Endothelial cell of umbilical vein (primary cell): ENCODE measurements at regions of chr3 and their contacts with region 1.

Region 1: GRCh38 chr3:56988458-56989168 is 71.9 kb upstream of the SPATA12 start:
- DNase-seq: peak; percentile 87
- H3K4me3 ChIP-seq: no peak overlapping the region
- H3K27ac ChIP-seq: no peak overlapping the region
- H3K4me1 ChIP-seq: no peaks in the 10 kb centered on the region
- H3K27me3 ChIP-seq: peaks cover 0 to 2% of the 10 kb centered on the region in 2 experiments
- CTCF ChIP-seq: peak; percentile 61 to 62
- POLR2A ChIP-seq: no peak

Region 2: GRCh38 chr3:56682462-56683121 is 306.0 kb before region 1 on chr3:
- CTCF ChIA-PET with region 1: interaction called, 12 read pairs
- POLR2A ChIA-PET with region 1: no interaction called
- dilution Hi-C with region 1: no loop called
- intact Hi-C with region 1: no loop called
- DNase-seq: peak; percentile 76
- H3K4me3 ChIP-seq: peak overlapping the region; percentile 40 to 85 (median 76)
- H3K27ac ChIP-seq: peak overlapping the region; percentile 82
- H3K4me1 ChIP-seq: peaks cover 14% of the 10 kb centered on the region
- H3K27me3 ChIP-seq: no peaks in the 10 kb centered on the region
- CTCF ChIP-seq: peak in 1 of 2 donors; percentile 9
- POLR2A ChIP-seq: peak; percentile 86

Region 3: DNA sequence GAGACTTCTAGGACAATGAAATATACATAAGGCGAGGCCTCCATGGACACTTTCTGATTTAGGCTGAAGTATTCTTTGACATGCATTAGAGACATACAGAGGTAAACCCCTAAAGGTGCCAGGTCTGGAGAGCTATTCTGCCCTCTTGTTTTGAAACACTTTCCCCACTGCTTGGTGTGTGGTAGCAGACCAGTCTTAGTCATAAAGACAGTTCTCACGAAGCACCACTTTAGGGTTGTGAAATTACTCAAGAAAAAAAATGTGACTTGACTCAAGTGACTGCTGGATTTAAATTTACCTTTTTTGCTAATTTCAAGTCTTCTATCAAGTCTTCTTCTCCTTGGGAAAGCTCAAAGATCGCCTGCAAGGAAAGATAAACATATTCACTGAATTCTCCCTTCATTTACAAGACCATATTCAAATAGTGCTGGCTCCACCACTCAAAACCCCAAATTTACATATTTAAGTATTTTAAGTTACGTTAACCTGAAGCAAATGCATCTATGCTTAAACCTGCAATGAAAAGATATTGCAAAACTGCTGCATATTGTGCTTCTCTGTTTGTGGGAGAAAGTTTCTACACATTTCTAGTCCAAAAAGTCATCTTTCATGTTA is 235.3 kb before region 1 on chr3:
- CTCF ChIA-PET with region 1: interaction called, 16 read pairs
- POLR2A ChIA-PET with region 1: no interaction called
- dilution Hi-C with region 1: no loop called
- intact Hi-C with region 1: loop called (anchors 5 kb)
- DNase-seq: no peak
- H3K4me3 ChIP-seq: no peak overlapping the region
- H3K27ac ChIP-seq: no peak overlapping the region
- H3K4me1 ChIP-seq: peaks cover 23% of the 10 kb centered on the region
- H3K27me3 ChIP-seq: no peaks in the 10 kb centered on the region
- CTCF ChIP-seq: no peak
- POLR2A ChIP-seq: no peak

Region 4: DNA sequence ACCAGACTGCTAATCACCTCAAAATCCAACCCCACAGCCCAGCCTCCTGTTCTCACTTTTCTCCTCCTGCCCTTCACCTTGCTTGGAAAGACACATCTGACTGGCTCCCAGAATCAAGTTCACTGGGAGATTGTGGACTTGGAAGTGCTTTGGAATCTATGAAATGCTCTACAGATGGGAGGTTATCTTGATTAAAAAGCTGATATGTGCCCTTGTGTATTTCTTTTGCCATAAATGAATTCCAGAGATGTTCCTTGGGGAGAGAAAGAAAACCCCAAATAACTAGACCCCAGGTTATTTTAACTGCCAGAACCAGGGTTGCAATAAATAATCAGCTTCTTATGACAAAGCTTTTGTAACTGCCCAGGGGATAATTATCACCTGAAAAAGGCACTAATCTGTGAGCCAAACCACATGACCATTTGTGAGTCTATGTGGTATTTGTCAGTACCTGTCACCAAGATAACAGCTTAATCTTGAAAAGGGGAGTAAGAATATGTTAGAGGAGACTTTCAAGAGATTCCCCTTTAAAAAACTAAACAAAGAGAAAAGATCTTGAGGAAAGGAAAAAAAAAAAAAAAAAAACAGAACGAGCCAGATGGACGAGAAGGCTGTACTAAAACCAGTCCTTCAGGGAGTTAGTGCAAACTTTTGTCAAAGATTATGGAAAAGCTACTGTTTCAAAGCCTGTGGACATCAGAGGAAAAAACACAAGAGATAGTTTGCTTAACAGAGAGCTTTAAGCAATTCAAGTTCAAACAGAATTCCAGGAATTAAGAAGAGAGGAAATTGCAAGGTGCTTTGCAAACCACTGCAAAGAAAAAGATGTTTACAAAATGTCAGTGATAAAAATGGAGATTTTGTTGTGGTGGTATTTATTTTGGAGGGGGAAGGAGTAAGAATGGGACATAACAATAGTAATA is 164.9 kb before region 1 on chr3:
- CTCF ChIA-PET with region 1: interaction called, 24 read pairs
- POLR2A ChIA-PET with region 1: no interaction called
- dilution Hi-C with region 1: no loop called
- intact Hi-C with region 1: no loop called
- DNase-seq: no peak
- H3K4me3 ChIP-seq: no peak overlapping the region
- H3K27ac ChIP-seq: no peak overlapping the region
- H3K4me1 ChIP-seq: no peaks in the 10 kb centered on the region
- H3K27me3 ChIP-seq: peaks cover 0 to 4% of the 10 kb centered on the region in 2 experiments
- CTCF ChIP-seq: no peak
- POLR2A ChIP-seq: no peak

Region 5: DNA sequence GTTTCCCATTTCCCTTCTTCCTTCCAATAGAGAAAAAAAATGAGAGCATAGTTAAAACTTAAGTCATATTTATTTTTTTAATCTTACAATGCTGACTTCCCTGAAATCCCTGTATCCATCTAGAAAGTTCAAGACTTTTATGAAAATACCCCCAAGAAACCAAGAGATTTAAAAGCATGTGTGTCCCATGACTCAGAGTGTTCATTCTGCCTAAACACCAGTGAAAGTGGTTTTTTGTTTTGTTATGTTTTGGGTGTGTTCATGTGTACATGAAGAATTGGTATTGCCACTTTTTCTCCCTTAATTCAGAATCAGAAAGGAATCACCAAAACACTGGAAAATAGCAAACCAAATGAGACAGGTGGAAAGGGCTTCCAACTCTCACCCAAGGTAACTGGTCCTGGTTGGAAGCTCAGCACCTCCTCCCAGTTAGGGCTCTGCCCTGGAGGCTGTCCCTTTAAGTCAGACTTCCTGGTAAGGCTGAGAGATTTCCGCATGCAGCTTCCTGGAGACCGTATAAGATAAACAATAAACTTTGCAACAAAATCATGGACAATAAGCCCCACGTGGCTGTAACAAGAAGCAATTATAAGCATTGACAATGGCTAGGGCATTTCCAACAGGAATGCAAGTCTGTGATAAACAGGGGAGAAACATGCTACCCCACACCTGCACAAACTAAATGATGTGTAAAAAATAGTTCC is 64.9 kb before region 1 on chr3:
- CTCF ChIA-PET with region 1: interaction called, 16 read pairs
- POLR2A ChIA-PET with region 1: no interaction called
- dilution Hi-C with region 1: no loop called
- intact Hi-C with region 1: no loop called
- DNase-seq: peak; percentile 97
- H3K4me3 ChIP-seq: no peak overlapping the region
- H3K27ac ChIP-seq: peak overlapping the region; percentile 92
- H3K4me1 ChIP-seq: peaks cover 71% of the 10 kb centered on the region
- H3K27me3 ChIP-seq: no peaks in the 10 kb centered on the region
- CTCF ChIP-seq: no peak
- POLR2A ChIP-seq: no peak

Region 6: GRCh38 chr3:57268416-57268815 is 279.8 kb after region 1 on chr3:
- CTCF ChIA-PET with region 1: no interaction called
- POLR2A ChIA-PET with region 1: no interaction called
- dilution Hi-C with region 1: no loop called
- intact Hi-C with region 1: no loop called
- DNase-seq: no peak
- H3K4me3 ChIP-seq: no peak overlapping the region
- H3K27ac ChIP-seq: no peak overlapping the region
- H3K4me1 ChIP-seq: no peaks in the 10 kb centered on the region
- H3K27me3 ChIP-seq: no peaks in the 10 kb centered on the region
- CTCF ChIP-seq: no peak
- POLR2A ChIP-seq: no peak